H1 (cell line): ENCODE measurements at regions of chr7 and their contacts with region 1.

Region 1: DNA sequence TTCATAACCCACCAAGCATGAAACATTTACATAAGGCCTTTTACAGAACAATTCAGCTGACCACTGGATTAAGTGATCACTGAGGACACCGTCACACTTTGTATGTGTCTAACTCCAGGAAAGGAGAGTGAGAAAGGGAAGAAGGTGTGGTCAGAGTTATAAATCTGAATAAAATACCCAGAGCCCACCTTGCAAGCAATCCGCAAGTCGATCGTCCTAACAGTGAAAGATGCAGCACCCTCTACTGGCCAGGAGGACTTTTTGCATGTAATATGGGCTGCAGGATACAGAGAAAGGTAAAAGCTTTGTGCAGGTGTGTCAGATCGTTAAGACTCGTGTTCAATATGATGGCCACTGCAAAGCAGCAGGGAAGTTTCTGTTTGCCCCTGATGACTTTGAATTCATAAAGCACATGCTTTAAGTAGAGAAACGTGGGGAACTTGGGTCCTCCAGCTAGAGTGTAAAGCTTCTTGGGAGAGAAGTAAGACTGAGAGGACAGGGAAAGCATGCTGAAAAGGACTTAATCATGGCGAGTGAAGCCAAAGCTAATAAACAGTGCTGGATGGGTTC is 68.5 kb upstream of the BMPER start:
- DNase-seq: peak in 1 of 2 experiments; percentile 82
- H3K4me3 ChIP-seq: no peak overlapping the region
- H3K27ac ChIP-seq: no peak overlapping the region
- H3K4me1 ChIP-seq: no peaks in the 10 kb centered on the region
- H3K27me3 ChIP-seq: no peaks in the 10 kb centered on the region
- CTCF ChIP-seq: peak; percentile 40 to 80 (median 47); a peak in 3 of 4 replicates
- EP300 ChIP-seq: no peak
- POLR2A ChIP-seq: no peak
- RAD21 ChIP-seq: peak; percentile 10 to 15; a peak in 1 of 4 replicates

Region 2: DNA sequence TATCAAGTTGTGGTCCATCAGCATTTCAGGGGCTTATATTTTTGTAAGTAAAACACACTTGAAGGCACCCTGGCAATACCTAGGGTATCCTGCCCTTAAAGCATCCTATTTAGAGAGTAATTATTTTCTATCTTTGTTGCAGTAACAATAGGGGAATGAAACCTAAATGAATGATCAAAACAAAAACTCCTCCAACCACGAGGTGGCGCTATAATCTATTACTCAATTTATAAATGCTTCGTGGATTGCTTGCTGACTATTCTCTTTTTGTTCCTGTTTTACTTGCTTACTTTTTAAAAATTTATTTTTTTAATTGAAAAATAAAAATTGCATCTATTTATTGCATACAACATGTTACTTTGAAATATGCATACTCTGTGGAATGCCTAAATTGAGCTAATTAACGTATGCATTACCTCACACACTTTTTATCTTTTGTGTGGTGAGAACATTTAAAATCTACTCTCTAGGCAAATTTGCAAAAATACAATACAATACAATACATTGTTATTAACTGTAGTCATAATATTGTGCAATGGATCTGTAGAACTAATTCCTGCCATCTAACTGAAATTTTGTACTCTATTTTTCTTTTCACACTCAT is 79.2 kb before region 1 on chr7:
- CTCF ChIA-PET with region 1: interaction called, 10 read pairs
- POLR2A ChIA-PET with region 1: no interaction called
- DNase-seq: no peak
- H3K4me3 ChIP-seq: no peak overlapping the region
- H3K27ac ChIP-seq: no peak overlapping the region
- H3K4me1 ChIP-seq: peaks cover 0 to 5% (median 3%) of the 10 kb centered on the region in 4 experiments; a peak in 3 of 7 replicates
- H3K27me3 ChIP-seq: no peaks in the 10 kb centered on the region
- CTCF ChIP-seq: peak in 2 of 3 experiments; percentile 18 to 41; a peak in 2 of 4 replicates
- EP300 ChIP-seq: no peak
- POLR2A ChIP-seq: no peak
- RAD21 ChIP-seq: peak; percentile 52

Region 3: GRCh38 chr7:33824911-33825459 is 11.9 kb before region 1 on chr7:
- CTCF ChIA-PET with region 1: interaction called, 27 read pairs
- POLR2A ChIA-PET with region 1: interaction called, 3 read pairs
- DNase-seq: no peak
- H3K4me3 ChIP-seq: no peak overlapping the region
- H3K27ac ChIP-seq: no peak overlapping the region
- H3K4me1 ChIP-seq: no peaks in the 10 kb centered on the region
- H3K27me3 ChIP-seq: no peaks in the 10 kb centered on the region
- CTCF ChIP-seq: no peak
- EP300 ChIP-seq: no peak
- POLR2A ChIP-seq: no peak
- RAD21 ChIP-seq: no peak

Region 4: GRCh38 chr7:33854801-33855350 is 18.0 kb after region 1 on chr7:
- CTCF ChIA-PET with region 1: interaction called, 19 read pairs
- POLR2A ChIA-PET with region 1: no interaction called
- DNase-seq: no peak
- H3K4me3 ChIP-seq: no peak overlapping the region
- H3K27ac ChIP-seq: no peak overlapping the region
- H3K4me1 ChIP-seq: no peaks in the 10 kb centered on the region
- H3K27me3 ChIP-seq: no peaks in the 10 kb centered on the region
- CTCF ChIP-seq: no peak
- EP300 ChIP-seq: no peak
- POLR2A ChIP-seq: no peak
- RAD21 ChIP-seq: no peak

Region 5: GRCh38 chr7:33895025-33895804 is 58.3 kb after region 1 on chr7:
- CTCF ChIA-PET with region 1: interaction called, 10 read pairs
- POLR2A ChIA-PET with region 1: no interaction called
- DNase-seq: peak; percentile 57 to 98
- H3K4me3 ChIP-seq: no peak overlapping the region
- H3K27ac ChIP-seq: no peak overlapping the region
- H3K4me1 ChIP-seq: peaks cover 0 to 3% (median 1%) of the 10 kb centered on the region in 4 experiments; a peak in 2 of 7 replicates
- H3K27me3 ChIP-seq: no peaks in the 10 kb centered on the region
- CTCF ChIP-seq: peak; percentile 84 to 93 (median 88)
- EP300 ChIP-seq: peak in 1 of 2 experiments; percentile 45; a peak in 1 of 3 replicates
- POLR2A ChIP-seq: no peak
- RAD21 ChIP-seq: peak; percentile 76 to 82